ENCODE measurements at regions of chr12 and their contacts with region 1.

Region 1: DNA sequence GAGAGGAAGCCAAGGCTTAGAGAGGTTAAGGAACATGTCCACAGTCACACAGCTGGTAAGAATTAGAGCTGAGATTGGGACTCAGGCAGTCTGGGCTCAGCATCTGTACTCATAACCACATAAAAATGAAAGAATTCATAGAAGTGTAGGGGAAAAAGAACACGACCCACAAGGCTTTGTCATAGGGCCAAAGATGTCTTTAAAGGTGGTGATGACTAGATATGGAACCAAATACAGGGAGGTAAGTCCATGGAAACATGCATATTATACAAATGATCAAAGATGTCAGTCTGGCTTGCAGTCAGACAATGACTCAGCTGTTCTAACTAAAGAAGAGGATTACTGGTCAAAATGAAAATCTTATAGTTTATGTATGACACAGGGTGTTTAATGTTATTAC is 7.2 kb upstream of the SSPN start:
- DNase-seq: no peak
- H3K4me3 ChIP-seq: no peak overlapping the region
- H3K4me3 Mint-ChIP-seq: no peak overlapping the region
- H3K27ac Mint-ChIP-seq: no peak overlapping the region
- H3K4me1 ChIP-seq: no peaks in the 10 kb centered on the region
- H3K4me1 Mint-ChIP-seq: peaks cover 6% of the 10 kb centered on the region
- H3K27me3 ChIP-seq: no peaks in the 10 kb centered on the region
- H3K27me3 Mint-ChIP-seq: no peaks in the 10 kb centered on the region
- CTCF ChIP-seq: no peak

Region 2: DNA sequence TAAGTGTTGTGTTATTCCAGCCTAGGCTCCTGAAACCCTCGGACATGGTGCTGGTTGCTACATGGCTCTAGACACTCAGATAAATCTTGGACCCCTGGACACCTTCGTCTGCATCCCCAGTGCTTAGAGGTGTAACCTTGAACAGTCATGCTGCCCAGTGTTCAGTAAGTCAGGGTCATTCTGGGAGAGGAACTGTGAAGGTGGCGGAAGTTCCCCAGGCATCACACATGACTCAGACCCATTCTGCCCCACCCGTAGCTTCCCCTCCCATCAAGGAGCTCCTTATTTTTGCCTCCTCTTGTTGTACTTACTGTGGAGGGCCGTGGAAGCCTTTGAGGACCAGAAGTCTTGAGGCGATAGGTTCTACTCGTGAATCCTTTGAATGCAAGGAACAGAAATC is 10.8 kb before region 1 on chr12:
- CTCF ChIA-PET with region 1: no interaction called
- POLR2A ChIA-PET with region 1: no interaction called
- intact Hi-C with region 1: no loop called
- DNase-seq: no peak
- H3K4me3 ChIP-seq: no peak overlapping the region
- H3K4me3 Mint-ChIP-seq: no peak overlapping the region
- H3K27ac Mint-ChIP-seq: no peak overlapping the region
- H3K4me1 ChIP-seq: peaks cover 4% of the 10 kb centered on the region; the same call in 1 of the 2 replicates
- H3K4me1 Mint-ChIP-seq: peaks cover 7% of the 10 kb centered on the region
- H3K27me3 ChIP-seq: no peaks in the 10 kb centered on the region
- H3K27me3 Mint-ChIP-seq: peaks cover 8% of the 10 kb centered on the region
- CTCF ChIP-seq: no peak

Region 3: DNA sequence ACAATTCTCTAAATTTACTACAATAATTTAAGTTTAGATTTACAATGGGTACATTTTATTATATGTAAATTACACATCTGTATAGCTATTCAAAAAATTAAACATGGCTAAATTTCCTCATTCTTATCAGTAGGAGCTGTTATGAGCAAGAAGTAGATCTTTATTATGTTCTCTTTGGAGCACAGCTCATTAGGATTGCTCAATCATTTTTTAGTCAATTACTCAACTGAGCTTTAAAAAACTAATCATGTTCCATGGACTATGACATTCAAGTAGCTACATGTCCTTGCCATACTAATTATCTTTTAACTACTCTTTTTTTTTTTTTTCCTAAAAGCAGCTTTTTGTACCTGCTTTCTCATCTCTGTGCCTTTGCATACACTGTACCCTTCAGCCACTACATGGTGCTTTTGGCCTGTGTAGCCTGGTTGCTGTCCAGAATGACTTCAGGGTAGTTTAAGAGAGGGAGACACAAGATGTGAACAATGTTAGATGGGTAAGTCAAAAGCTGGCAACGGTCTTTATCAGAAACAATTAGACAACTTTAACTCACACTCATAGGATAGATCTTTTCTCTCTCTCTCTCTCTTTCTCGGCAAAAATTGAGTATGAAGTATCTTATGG is 76.2 kb after region 1 on chr12:
- CTCF ChIA-PET with region 1: no interaction called
- POLR2A ChIA-PET with region 1: no interaction called
- intact Hi-C with region 1: no loop called
- DNase-seq: no peak
- H3K4me3 ChIP-seq: no peak overlapping the region
- H3K4me3 Mint-ChIP-seq: no peak overlapping the region
- H3K27ac Mint-ChIP-seq: no peak overlapping the region
- H3K4me1 ChIP-seq: no peaks in the 10 kb centered on the region
- H3K4me1 Mint-ChIP-seq: no peaks in the 10 kb centered on the region
- H3K27me3 ChIP-seq: no peaks in the 10 kb centered on the region
- H3K27me3 Mint-ChIP-seq: no peaks in the 10 kb centered on the region
- CTCF ChIP-seq: no peak

Region 4: GRCh38 chr12:26274441-26275312 is 86.5 kb after region 1 on chr12:
- CTCF ChIA-PET with region 1: no interaction called
- POLR2A ChIA-PET with region 1: no interaction called
- intact Hi-C with region 1: loop called (anchors 2 kb)
- DNase-seq: peak; percentile 84 to 88
- H3K4me3 ChIP-seq: no peak overlapping the region
- H3K4me3 Mint-ChIP-seq: peak overlapping the region; percentile 6
- H3K27ac Mint-ChIP-seq: peak overlapping the region; percentile 92
- H3K4me1 ChIP-seq: peaks cover 47% of the 10 kb centered on the region
- H3K4me1 Mint-ChIP-seq: peaks cover 30% of the 10 kb centered on the region
- H3K27me3 ChIP-seq: no peaks in the 10 kb centered on the region
- H3K27me3 Mint-ChIP-seq: no peaks in the 10 kb centered on the region
- CTCF ChIP-seq: no peak

Region 5: GRCh38 chr12:26402648-26403047 is 214.5 kb after region 1 on chr12:
- CTCF ChIA-PET with region 1: no interaction called
- POLR2A ChIA-PET with region 1: no interaction called
- intact Hi-C with region 1: loop called (anchors 10 kb)
- DNase-seq: peak; percentile 46 to 47
- H3K4me3 ChIP-seq: no peak overlapping the region
- H3K4me3 Mint-ChIP-seq: no peak overlapping the region
- H3K27ac Mint-ChIP-seq: no peak overlapping the region
- H3K4me1 ChIP-seq: no peaks in the 10 kb centered on the region
- H3K4me1 Mint-ChIP-seq: no peaks in the 10 kb centered on the region
- H3K27me3 ChIP-seq: no peaks in the 10 kb centered on the region
- H3K27me3 Mint-ChIP-seq: no peaks in the 10 kb centered on the region
- CTCF ChIP-seq: peak; percentile 38 to 43

Region 6: DNA sequence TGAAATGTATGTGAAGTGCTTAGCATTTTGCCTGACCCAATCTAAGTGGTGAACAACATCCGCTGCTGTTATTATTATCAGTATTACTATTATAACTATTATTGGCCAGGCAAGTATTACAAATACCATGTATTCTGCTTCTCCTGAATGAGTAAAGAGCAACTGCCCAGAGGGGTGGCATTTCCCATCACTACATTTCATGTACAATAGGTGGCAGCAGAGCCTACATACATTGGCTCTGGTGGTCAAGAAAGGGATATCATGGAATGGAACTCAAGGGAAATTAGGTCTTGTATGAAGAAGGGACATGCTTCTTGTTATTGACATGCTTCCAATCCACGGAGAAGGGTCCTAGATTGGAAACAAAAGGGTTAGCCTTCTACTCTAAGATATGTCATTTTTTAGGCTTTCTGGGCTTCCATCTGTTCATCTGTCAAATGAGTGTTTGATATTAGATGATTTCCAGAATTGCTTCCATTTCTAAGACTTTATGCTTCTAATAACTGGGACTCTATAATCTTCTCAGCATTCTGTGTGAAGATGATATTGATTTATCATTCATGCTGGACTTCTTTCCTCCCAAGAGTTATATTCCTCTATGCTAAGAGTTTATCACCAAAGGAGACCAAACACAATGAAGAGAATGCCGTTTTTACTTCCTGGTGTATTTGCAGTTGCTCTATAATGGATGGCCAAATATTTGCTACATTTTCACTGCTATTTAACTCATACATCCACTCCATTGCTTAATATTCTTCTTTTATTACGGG is 246.4 kb after region 1 on chr12:
- CTCF ChIA-PET with region 1: no interaction called
- POLR2A ChIA-PET with region 1: no interaction called
- intact Hi-C with region 1: loop called (anchors 1 kb)
- DNase-seq: peak; percentile 72 to 77
- H3K4me3 ChIP-seq: no peak overlapping the region
- H3K4me3 Mint-ChIP-seq: peak overlapping the region; percentile 16
- H3K27ac Mint-ChIP-seq: peak overlapping the region; percentile 45
- H3K4me1 ChIP-seq: peaks cover 27% of the 10 kb centered on the region
- H3K4me1 Mint-ChIP-seq: peaks cover 17% of the 10 kb centered on the region
- H3K27me3 ChIP-seq: no peaks in the 10 kb centered on the region
- H3K27me3 Mint-ChIP-seq: no peaks in the 10 kb centered on the region
- CTCF ChIP-seq: peak; percentile 89 to 97

Region 7: DNA sequence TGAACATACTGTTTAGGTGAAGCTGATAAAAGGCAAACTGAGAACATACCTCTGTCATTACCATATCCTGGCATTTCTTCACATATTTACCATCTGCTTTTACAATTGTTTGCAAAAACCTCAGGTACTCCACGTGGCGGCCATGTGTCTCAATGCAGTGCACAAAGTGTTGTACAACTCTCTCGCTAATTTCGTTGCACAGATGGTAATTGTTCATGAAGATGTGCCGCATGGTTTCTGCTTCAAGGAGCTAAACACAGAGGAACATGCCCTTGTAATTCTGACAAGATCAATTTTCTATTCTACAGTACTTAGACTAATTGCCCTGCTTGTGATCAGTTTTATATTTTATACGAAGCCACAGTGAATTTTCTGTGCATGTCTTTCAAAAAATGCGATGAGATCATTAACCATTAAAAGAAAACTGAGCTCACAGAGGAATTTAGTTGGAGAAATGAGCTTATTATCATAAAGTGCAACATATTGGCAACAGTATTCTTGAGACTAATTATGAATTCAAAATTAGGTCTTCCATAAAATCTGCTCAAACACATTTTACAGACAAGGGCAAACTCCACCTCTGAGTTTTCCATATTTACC is 411.1 kb after region 1 on chr12:
- CTCF ChIA-PET with region 1: no interaction called
- POLR2A ChIA-PET with region 1: no interaction called
- intact Hi-C with region 1: loop called (anchors 5 kb)
- DNase-seq: peak in 1 of 2 experiments; percentile 13
- H3K4me3 ChIP-seq: no peak overlapping the region
- H3K4me3 Mint-ChIP-seq: no peak overlapping the region
- H3K27ac Mint-ChIP-seq: no peak overlapping the region
- H3K4me1 ChIP-seq: no peaks in the 10 kb centered on the region
- H3K4me1 Mint-ChIP-seq: peaks cover 12% of the 10 kb centered on the region
- H3K27me3 ChIP-seq: no peaks in the 10 kb centered on the region
- H3K27me3 Mint-ChIP-seq: no peaks in the 10 kb centered on the region
- CTCF ChIP-seq: no peak

Measured in Caco-2 (cell line).